K562 (cell line): ENCODE measurements at regions of chr1 and their contacts with region 1.

Region 1: DNA sequence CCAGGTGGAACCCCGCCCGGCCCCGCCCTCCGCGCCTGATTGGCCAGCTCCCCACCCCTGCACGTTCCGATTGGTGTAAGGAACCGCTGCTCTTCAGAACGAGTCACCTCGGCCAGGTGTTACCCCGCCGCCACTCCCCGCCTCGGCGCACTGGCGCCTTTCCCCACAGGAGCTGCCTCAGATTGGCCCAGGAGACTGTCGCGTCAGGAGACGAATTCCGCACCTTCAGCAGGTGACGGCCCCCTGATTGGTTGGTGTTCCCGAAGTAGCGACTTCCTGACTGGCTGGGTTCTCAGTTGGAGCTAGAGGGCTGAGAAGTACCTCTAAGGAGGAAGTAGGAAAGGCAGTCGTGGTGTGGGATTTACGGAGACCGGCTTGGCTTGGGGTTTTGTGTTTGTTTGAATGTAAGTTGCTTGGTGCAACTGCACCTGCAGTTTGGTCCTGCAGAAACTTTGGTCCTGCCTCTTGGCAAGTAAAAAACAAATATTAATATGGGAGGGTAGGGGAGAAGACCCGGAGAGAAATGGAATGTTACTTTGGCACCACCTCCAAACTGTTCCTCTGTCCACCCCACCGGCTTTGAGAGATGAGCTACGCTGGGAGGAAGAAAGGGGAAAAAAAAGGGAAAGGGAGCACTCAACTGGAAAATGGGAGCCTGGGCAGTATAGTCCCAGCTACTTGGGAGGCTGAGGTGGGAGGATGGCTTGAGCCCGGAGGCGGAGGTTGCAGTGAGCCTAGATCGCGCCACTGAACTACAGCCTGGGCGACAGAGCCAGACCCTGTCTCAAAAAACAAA is 411 bp upstream of the F11R start:
- DNase-seq: peak; percentile 96 to 98 (median 98)
- ATAC-seq: peak; percentile 89
- H3K4me3 ChIP-seq: peak overlapping the region; percentile 87
- H3K27ac ChIP-seq: peak overlapping the region; percentile 96
- H3K4me1 ChIP-seq: peaks cover 26 to 30% of the 10 kb centered on the region in 2 experiments
- H3K27me3 ChIP-seq: no peaks in the 10 kb centered on the region
- CTCF ChIP-seq: no peak
- EP300 ChIP-seq: no peak
- POLR2A ChIP-seq: peak; percentile 94
- RAD21 ChIP-seq: no peak

Region 2: DNA sequence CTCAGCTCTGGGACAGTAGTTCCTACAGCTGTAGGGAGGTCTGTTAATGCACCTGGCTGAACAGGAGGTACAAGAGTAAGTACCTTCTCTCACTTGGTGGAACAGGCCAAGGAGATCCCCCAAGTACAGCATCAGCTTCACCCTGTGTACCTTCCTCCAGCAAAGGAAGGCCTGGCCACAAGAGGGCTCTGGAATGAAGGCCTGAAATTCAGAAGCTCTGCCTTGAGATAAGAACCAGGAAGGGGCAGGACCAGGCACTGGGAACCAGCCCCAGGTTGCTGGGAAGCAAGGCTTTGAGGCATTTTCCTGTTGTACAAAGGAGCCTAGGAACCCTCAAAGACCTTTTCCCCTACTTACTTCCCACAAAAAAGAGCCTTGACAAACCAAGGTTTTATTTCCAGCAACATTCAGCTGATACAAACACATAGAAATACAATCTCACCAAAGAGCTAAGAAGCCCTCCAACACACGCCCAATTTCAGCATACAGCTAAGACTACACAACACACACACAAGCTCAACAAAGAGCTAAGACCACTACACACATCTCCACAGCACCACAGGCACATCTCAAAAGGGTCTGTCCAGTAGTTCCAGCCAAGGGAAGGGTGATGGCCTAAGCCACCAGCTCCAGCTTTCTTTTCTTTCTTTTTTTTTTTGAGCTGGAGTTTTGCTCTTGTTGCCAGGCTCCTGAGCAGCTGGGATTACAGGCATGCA is 23.9 kb before region 1 on chr1:
- CTCF ChIA-PET with region 1: no interaction called
- POLR2A ChIA-PET with region 1: interaction called, 13 read pairs
- in situ Hi-C with region 1: no loop called
- intact Hi-C with region 1: loop called (anchors 1 kb)
- DNase-seq: peak; percentile 67 to 85 (median 76)
- ATAC-seq: peak; percentile 93
- H3K4me3 ChIP-seq: no peak overlapping the region
- H3K27ac ChIP-seq: peak overlapping the region; percentile 52
- H3K4me1 ChIP-seq: peaks cover 7 to 20% of the 10 kb centered on the region in 2 experiments; a peak in 3 of 5 replicates
- H3K27me3 ChIP-seq: no peaks in the 10 kb centered on the region
- CTCF ChIP-seq: peak; percentile 91 to 93 (median 92)
- EP300 ChIP-seq: peak; percentile 29; the same call in 1 of the 2 replicates
- POLR2A ChIP-seq: no peak; the same call in 1 of the 2 replicates
- RAD21 ChIP-seq: peak; percentile 77 to 95